Common myeloid progenitor, CD34-positive (primary cell): ENCODE measurements at regions of chr1 and their contacts with region 1.

Region 1: DNA sequence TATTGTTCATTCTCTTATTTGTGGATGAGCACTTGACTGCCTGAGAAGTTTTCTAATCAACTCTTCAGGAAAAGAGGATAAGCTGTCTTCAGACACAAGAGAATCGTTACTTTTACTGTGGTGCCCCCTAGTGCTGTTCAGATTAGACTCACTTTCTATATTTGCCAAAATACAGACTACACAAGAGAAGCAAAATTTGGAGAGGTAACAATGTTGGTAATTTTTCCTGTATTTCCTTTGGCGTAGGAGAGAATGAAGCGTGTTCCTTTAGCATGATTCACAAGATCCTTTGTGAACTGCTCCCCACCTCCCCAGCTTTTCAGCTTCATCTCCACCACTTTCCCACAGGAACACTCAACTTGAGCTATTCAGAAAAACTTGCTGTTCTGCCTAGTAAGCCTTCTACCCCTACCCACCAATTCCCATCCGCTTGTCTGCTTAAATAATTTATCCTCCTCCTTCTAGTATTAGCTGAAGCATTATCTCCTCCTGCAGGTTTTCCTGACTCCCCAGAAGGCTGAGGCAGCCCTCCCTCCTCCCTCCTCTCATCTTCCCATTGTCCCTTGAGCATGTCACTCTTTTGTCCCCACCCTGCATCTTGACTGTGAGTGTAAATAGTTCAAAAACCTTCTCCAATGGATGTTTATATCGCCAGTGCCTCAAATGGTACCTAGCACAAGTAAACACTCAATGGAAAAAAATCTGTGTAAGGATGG is 4.5 kb downstream of the TNFSF4 start:
- DNase-seq: peak; percentile 59 to 67 (median 65)
- H3K4me3 ChIP-seq: peak overlapping the region in 6 of 7 experiments; percentile 65 to 86 (median 73)
- H3K27ac ChIP-seq: peak overlapping the region; percentile 55 to 83
- H3K4me1 ChIP-seq: peaks cover 38 to 79% (median 51%) of the 10 kb centered on the region in 4 experiments
- H3K27me3 ChIP-seq: no peaks in the 10 kb centered on the region

Region 2: DNA sequence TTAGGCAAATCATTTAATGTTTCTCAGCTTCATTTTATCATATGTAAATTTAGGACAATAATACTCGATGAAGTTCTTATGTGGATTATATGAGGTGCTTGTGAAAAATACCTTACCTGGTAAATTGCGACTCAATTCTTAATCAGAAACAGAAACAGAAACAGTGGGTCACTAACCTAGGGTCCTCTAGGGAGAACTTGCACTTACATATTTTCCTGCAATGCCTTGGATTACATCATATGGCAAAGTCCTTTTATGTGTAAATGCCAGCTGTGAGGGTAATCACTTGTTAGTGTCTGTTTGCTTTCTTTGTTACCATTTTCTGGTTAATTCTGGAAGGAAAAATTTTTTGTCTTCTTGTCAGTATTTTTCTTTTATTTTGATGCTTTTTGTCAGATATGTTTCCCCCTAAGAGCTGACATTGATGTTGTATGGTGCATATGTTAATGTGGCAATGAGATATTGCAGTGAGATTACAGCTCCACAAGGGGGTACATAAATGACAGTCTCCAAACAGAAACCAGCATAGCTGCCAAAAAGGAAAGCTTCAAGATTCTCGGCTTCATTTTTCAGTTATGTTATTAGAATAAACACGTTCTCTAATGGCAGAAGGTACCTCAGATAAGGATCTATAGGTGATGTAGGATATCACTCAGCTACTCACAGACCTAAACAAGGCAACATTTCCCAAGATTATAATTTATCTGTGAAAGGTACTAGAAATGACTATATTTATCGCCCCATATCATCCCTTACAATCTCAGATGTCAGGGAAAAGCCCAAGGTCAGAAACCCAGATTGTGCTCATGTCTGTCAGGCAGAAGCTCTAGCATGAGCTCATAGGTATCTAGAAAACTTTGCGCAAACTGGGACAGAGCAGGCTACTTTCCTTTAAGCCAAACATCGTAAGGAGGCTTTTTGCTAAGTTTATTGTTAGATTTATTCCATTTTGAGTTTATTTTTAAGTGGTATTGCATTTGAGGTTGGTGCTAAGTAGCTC is 423.8 kb before region 1 on chr1:
- CTCF ChIA-PET with region 1: interaction called, 35 read pairs
- POLR2A ChIA-PET with region 1: interaction called, 3 read pairs
- DNase-seq: peak; percentile 42 to 78 (median 72)
- H3K4me3 ChIP-seq: peak overlapping the region in 4 of 7 experiments; percentile 19 to 65 (median 43)
- H3K27ac ChIP-seq: no peak overlapping the region
- H3K4me1 ChIP-seq: peaks cover 0 to 9% (median 1%) of the 10 kb centered on the region in 4 experiments
- H3K27me3 ChIP-seq: no peaks in the 10 kb centered on the region

Region 3: GRCh38 chr1:172818841-172819527 is 383.6 kb before region 1 on chr1:
- CTCF ChIA-PET with region 1: interaction called, 163 read pairs
- POLR2A ChIA-PET with region 1: no interaction called
- DNase-seq: peak; percentile 27 to 79 (median 66)
- H3K4me3 ChIP-seq: no peak overlapping the region
- H3K27ac ChIP-seq: peak overlapping the region in 1 of 2 experiments; percentile 37
- H3K4me1 ChIP-seq: peaks cover 16 to 42% (median 33%) of the 10 kb centered on the region in 4 experiments
- H3K27me3 ChIP-seq: no peaks in the 10 kb centered on the region

Region 4: GRCh38 chr1:172826096-172826743 is 376.4 kb before region 1 on chr1:
- CTCF ChIA-PET with region 1: interaction called, 163 read pairs
- POLR2A ChIA-PET with region 1: interaction called, 5 read pairs
- DNase-seq: peak; percentile 55 to 62 (median 57)
- H3K4me3 ChIP-seq: peak overlapping the region in 4 of 7 experiments; percentile 9 to 69 (median 44)
- H3K27ac ChIP-seq: no peak overlapping the region
- H3K4me1 ChIP-seq: peaks cover 6 to 54% (median 35%) of the 10 kb centered on the region in 4 experiments
- H3K27me3 ChIP-seq: no peaks in the 10 kb centered on the region

Region 5: DNA sequence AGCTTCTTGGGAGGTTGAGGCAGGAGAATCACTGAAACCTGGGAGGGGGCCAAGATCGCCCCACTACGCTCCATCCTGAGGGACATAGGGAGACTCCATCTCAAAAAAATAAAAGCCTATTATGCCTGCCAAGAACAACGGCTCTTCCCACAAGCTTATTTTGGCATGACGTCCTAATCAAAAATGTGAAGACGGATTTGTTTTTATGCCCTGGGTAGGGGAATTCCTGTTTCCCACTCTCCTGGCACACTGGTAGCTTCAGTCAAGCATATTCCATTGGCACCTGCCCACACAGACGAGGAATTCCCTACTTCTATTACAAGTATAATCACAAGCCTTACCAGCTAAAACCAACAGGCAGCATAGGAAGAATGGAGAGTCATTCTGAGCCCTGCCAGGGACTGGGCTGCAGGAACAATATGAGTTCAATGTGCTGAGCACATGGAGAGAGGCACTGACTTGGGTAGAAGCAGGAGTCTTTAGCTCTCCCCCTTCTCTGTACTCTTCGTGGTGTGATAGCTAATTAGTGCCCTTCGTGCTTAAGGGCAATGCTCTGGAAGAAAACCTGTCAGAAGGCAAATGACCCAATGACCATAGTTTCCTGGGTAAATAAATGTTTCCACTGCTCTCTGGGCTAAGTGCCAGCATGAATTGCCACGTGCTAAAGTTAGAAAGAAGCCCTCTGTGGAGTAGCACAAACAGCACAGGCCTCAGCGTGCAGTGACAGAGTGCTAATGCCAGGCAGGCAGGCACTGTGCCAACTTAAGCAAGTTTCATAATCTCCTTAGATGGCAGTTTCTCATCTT is 12.3 kb before region 1 on chr1:
- CTCF ChIA-PET with region 1: interaction called, 34 read pairs
- POLR2A ChIA-PET with region 1: interaction called, 3 read pairs
- DNase-seq: peak in 2 of 3 donors; percentile 81 to 83
- H3K4me3 ChIP-seq: peak overlapping the region in 3 of 7 experiments; percentile 5 to 25 (median 23)
- H3K27ac ChIP-seq: peak overlapping the region; percentile 25 to 59
- H3K4me1 ChIP-seq: peaks cover 13 to 40% (median 32%) of the 10 kb centered on the region in 4 experiments
- H3K27me3 ChIP-seq: no peaks in the 10 kb centered on the region

Region 6: GRCh38 chr1:173212952-173213491 is 10.4 kb after region 1 on chr1:
- CTCF ChIA-PET with region 1: interaction called, 82 read pairs
- POLR2A ChIA-PET with region 1: no interaction called
- DNase-seq: no peak
- H3K4me3 ChIP-seq: no peak overlapping the region
- H3K27ac ChIP-seq: no peak overlapping the region
- H3K4me1 ChIP-seq: peaks cover 8 to 40% (median 18%) of the 10 kb centered on the region in 4 experiments
- H3K27me3 ChIP-seq: no peaks in the 10 kb centered on the region